Activated B cell treated with CpG ODN at 0.5 μM for 24 hours (primary cell): ENCODE measurements at regions of chr15 and their contacts with region 1.

Region 1: DNA sequence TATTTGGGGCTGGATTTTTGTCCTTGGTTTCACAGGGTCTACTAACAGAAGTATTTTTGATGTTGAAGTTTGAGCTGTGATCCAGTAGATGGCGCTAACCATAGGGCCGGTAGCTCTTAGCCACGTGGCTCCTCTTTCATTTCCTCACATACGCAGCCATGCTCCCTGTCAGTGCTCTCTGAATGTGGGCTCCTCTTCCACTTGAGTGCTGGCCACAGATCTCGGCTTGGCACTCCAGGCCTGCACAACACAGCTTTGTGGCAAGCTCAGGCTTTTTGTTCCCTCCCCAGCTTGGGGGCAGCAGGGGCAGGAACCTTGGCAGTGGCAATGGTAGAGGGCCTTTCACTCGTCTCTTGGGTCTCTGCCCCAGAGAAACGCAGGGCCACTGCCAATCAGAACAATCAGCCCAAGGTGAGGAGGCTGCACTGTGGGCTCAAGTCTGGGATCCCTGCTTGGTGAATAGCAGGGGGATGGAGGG is 18.6 kb upstream of the DNAAF4 start:
- DNase-seq: no peak
- ATAC-seq: peak; percentile 42
- H3K4me3 Mint-ChIP-seq: no peak overlapping the region
- H3K27ac Mint-ChIP-seq: no peak overlapping the region
- H3K4me1 Mint-ChIP-seq: no peaks in the 10 kb centered on the region
- H3K27me3 Mint-ChIP-seq: peaks cover 28% of the 10 kb centered on the region
- CTCF ChIP-seq: no peak

Region 2: GRCh38 chr15:55507567-55507966 is 19.0 kb before region 1 on chr15:
- CTCF ChIA-PET with region 1: no interaction called
- POLR2A ChIA-PET with region 1: no interaction called
- intact Hi-C with region 1: no loop called
- DNase-seq: no peak
- ATAC-seq: no peak
- H3K4me3 Mint-ChIP-seq: no peak overlapping the region
- H3K27ac Mint-ChIP-seq: no peak overlapping the region
- H3K4me1 Mint-ChIP-seq: no peaks in the 10 kb centered on the region
- H3K27me3 Mint-ChIP-seq: peaks cover 12% of the 10 kb centered on the region
- CTCF ChIP-seq: no peak

Region 3: GRCh38 chr15:55637086-55637485 is 110.5 kb after region 1 on chr15:
- CTCF ChIA-PET with region 1: interaction called, 4 read pairs
- POLR2A ChIA-PET with region 1: no interaction called
- intact Hi-C with region 1: loop called (anchors 1 kb)
- DNase-seq: no peak
- ATAC-seq: no peak
- H3K4me3 Mint-ChIP-seq: no peak overlapping the region
- H3K27ac Mint-ChIP-seq: no peak overlapping the region
- H3K4me1 Mint-ChIP-seq: no peaks in the 10 kb centered on the region
- H3K27me3 Mint-ChIP-seq: peaks cover 6% of the 10 kb centered on the region
- CTCF ChIP-seq: no peak

Region 4: GRCh38 chr15:55846116-55846707 is 319.6 kb after region 1 on chr15:
- CTCF ChIA-PET with region 1: no interaction called
- POLR2A ChIA-PET with region 1: no interaction called
- intact Hi-C with region 1: loop called (anchors 5 kb)
- DNase-seq: no peak
- ATAC-seq: no peak
- H3K4me3 Mint-ChIP-seq: no peak overlapping the region
- H3K27ac Mint-ChIP-seq: no peak overlapping the region
- H3K4me1 Mint-ChIP-seq: no peaks in the 10 kb centered on the region
- H3K27me3 Mint-ChIP-seq: no peaks in the 10 kb centered on the region
- CTCF ChIP-seq: peak; percentile 18